HepG2 (cell line): ENCODE measurements at regions of chr10 and their contacts with region 1.

Region 1: DNA sequence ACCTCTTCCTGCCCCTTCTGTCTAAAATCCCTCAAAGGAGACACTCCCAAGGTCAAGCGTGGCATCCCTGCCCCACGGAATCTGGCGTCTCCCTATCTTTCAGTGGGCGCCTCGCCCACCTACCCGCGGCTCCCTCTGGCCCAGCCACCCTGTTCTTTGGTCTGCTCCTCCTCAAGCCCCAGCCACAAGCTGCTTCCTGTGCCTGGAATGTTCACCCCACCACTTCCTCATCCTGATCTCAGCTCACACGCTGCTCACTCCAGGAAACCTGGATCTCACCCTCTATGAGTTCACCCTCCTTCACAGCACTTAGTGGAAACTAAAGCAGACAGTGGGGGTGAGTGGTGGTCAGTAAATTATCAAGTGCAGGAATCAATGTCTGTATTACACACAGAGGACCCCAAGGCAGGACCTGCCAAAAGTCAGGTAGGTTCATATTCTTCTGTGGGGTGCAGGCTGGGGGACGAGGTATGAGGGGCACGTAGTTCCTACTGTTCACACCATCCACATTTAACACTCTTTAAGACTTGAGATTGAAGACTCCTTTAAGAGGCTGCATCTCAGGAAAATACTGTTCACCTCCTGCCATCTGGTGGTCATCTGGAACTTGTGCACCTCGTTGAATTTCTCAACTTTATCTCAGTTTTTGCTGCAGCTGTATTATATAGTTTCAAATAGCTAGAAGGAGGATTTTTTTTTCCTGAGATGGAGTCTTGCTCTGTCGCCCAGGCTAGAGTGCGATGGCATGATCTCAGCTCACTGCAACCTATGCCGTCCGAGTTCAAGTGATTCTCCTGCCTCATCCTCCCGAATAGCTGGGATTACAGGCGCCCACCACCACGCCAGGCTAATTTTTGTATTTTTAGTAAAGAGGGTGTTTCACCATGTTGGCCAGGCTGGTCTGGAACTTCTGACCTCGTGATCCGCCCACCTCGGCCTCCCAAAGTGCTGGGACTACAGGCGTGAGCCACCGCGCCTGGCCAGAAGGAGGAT is 166.6 kb downstream of the ARHGAP21 start:
- DNase-seq: peak; percentile 43
- ATAC-seq: peak; percentile 37
- H3K4me3 ChIP-seq: 0 out of 6 replicates have a peak overlapping the region, but pooled peaks of 1 of the 3 experiments have one; percentile 8
- H3K27ac ChIP-seq: no peak overlapping the region
- H3K4me1 ChIP-seq: peaks cover 42% of the 10 kb centered on the region
- H3K27me3 ChIP-seq: no peaks in the 10 kb centered on the region
- CTCF ChIP-seq: peak; percentile 82
- EP300 ChIP-seq: no peak
- POLR2A ChIP-seq: no peak
- RAD21 ChIP-seq: peak; percentile 64

Region 2: DNA sequence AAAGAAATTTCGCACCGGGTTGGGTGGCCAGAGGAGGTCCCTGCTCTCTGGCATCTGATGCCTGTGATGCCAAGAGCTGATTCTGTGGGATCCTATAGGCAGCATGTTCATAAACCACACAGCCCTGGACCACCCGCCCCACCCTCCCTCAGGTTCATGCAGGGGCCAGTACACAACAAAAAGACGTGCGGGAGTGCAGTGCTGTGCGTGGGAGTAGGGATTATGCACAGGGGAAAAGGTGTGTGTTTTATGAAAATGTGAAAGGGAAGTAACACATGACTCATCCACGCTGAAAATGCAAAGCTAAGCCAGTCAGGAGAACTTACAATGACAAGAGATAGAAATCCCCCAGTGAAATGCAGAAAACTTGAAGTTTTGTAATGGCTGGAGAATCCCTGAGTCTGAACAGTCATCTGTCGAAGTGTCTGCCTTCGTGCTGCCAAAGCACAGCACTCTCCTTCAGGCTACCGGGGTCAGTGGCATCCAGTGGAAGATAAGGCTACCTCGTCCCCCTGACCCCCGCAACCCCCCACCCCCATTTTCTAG is 347.0 kb before region 1 on chr10:
- CTCF ChIA-PET with region 1: no interaction called
- POLR2A ChIA-PET with region 1: no interaction called
- in situ Hi-C with region 1: loop called (anchors 10 kb)
- intact Hi-C with region 1: no loop called
- DNase-seq: peak; percentile 38
- ATAC-seq: peak; percentile 5; the same call in 2 of the 3 replicates
- H3K4me3 ChIP-seq: peak overlapping the region; percentile 70 to 88 (median 80)
- H3K27ac ChIP-seq: peak overlapping the region; percentile 90
- H3K4me1 ChIP-seq: peaks cover 64% of the 10 kb centered on the region
- H3K27me3 ChIP-seq: no peaks in the 10 kb centered on the region
- CTCF ChIP-seq: no peak
- EP300 ChIP-seq: no peak
- POLR2A ChIP-seq: peak in 1 of 2 experiments; percentile 33; a peak in 2 of 4 replicates
- RAD21 ChIP-seq: no peak

Region 3: DNA sequence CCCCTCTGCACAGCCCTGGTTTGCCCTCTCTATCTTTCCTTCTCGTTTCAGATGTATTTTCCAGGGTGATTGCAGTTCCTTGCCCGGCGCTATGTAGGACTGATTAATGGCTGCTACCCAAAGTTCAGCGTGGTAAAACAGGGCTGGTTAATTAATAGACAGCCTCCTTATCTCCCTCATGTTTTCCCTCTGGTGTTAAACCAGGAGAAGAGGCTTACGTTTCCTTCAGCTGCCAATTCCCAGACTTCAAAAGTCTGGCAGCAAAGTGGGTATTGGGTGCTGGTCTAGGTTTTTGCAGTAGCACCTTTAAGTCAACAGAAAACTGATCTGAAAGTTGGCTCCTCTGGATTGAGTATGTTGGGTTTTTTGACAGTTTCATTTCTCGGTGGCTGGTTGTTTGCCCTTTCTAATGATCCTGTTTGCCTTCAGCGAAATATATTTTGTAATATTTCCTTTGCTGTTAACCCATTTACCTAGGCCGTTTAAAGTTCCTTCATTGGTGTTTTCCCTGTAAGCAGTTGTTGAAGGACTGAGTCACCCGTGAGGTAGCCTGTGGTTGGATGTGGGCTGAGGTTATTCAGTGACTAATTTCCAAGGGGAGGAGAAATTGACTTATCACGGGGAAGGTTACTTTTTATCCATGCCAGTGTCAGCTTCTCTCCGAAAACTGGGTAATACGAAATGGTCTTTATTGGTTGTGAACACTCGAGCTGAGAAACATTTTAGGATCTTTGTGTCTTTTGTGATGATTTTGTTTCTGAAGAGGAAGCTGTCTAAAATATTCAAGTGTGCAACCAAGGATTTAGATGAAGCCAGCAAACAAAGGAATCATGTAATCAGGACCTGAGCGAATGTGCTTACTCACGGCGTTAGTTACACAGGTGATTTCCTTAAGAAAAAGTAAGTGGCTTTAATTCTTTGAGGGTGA is 90.9 kb before region 1 on chr10:
- CTCF ChIA-PET with region 1: interaction called, 4 read pairs
- POLR2A ChIA-PET with region 1: no interaction called
- in situ Hi-C with region 1: no loop called
- intact Hi-C with region 1: loop called (anchors 10 kb)
- DNase-seq: peak; percentile 92
- ATAC-seq: peak; percentile 96
- H3K4me3 ChIP-seq: peak overlapping the region; percentile 63 to 72 (median 67)
- H3K27ac ChIP-seq: peak overlapping the region; percentile 94
- H3K4me1 ChIP-seq: peaks cover 53% of the 10 kb centered on the region
- H3K27me3 ChIP-seq: no peaks in the 10 kb centered on the region
- CTCF ChIP-seq: no peak
- EP300 ChIP-seq: peak in 1 of 2 experiments; percentile 13; a peak in 1 of 4 replicates
- POLR2A ChIP-seq: peak; percentile 62 to 72
- RAD21 ChIP-seq: no peak

Region 4: GRCh38 chr10:24518981-24519597 is 38.0 kb before region 1 on chr10:
- CTCF ChIA-PET with region 1: interaction called, 11 read pairs
- POLR2A ChIA-PET with region 1: no interaction called
- in situ Hi-C with region 1: no loop called
- intact Hi-C with region 1: loop called (anchors 1 kb)
- DNase-seq: peak; percentile 53
- ATAC-seq: peak; percentile 83
- H3K4me3 ChIP-seq: no peak overlapping the region
- H3K27ac ChIP-seq: peak overlapping the region; percentile 52
- H3K4me1 ChIP-seq: peaks cover 12% of the 10 kb centered on the region
- H3K27me3 ChIP-seq: no peaks in the 10 kb centered on the region
- CTCF ChIP-seq: peak; percentile 74
- EP300 ChIP-seq: no peak
- POLR2A ChIP-seq: no peak
- RAD21 ChIP-seq: 0 out of 2 replicates have a peak, but pooled peaks have one; percentile 51

Region 5: DNA sequence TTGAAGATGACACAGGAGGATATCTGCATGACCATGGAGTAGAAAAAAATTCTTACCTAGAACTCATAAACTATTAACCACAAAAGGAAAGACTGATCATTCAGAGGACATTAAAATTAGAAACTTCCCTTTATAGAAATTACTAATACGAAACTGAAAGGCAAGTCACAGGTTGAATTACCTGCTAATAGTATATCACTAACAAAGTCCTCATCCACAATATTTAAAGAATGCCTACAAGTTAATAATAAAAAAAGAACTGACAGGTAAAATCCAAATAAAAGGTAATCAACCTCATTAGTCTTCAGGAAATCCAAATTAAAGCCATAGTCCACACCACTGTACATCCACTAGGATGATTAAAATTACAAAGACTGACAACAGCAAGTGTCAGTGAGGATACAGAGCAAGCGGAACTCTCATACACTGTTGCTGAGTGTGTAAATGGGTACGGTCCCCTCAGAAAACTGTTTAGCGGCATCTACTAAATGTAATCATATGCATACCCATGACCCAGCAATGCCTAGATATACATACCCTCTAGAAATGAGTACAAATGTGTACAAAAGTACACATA is 95.4 kb after region 1 on chr10:
- CTCF ChIA-PET with region 1: no interaction called
- POLR2A ChIA-PET with region 1: no interaction called
- in situ Hi-C with region 1: no loop called
- intact Hi-C with region 1: no loop called
- DNase-seq: no peak
- ATAC-seq: no peak
- H3K4me3 ChIP-seq: no peak overlapping the region
- H3K27ac ChIP-seq: no peak overlapping the region
- H3K4me1 ChIP-seq: no peaks in the 10 kb centered on the region
- H3K27me3 ChIP-seq: no peaks in the 10 kb centered on the region
- CTCF ChIP-seq: no peak
- EP300 ChIP-seq: no peak
- POLR2A ChIP-seq: no peak
- RAD21 ChIP-seq: no peak